ENCODE measurements at regions of chr18 and their contacts with region 1.

Region 1: GRCh38 chr18:36229188-36229587 is 41.9 kb downstream of the MOCOS start:
- DNase-seq: no peak
- H3K4me3 ChIP-seq: no peak overlapping the region
- H3K27ac ChIP-seq: no peak overlapping the region
- H3K4me1 ChIP-seq: no peaks in the 10 kb centered on the region
- H3K27me3 ChIP-seq: no peaks in the 10 kb centered on the region
- CTCF ChIP-seq: no peak

Region 2: GRCh38 chr18:36419905-36420531 is 190.8 kb after region 1 on chr18:
- CTCF ChIA-PET with region 1: no interaction called
- POLR2A ChIA-PET with region 1: no interaction called
- intact Hi-C with region 1: no loop called
- DNase-seq: peak in 1 of 2 experiments; percentile 13
- H3K4me3 ChIP-seq: no peak overlapping the region
- H3K27ac ChIP-seq: peak overlapping the region; percentile 26; the same call in 1 of the 2 replicates
- H3K4me1 ChIP-seq: peaks cover 4% of the 10 kb centered on the region; the same call in 1 of the 2 replicates
- H3K27me3 ChIP-seq: no peaks in the 10 kb centered on the region
- CTCF ChIP-seq: no peak

Region 3: GRCh38 chr18:36597636-36598035 is 368.4 kb after region 1 on chr18:
- CTCF ChIA-PET with region 1: no interaction called
- POLR2A ChIA-PET with region 1: interaction called, 10 read pairs
- intact Hi-C with region 1: no loop called
- DNase-seq: no peak
- H3K4me3 ChIP-seq: no peak overlapping the region
- H3K27ac ChIP-seq: no peak overlapping the region
- H3K4me1 ChIP-seq: no peaks in the 10 kb centered on the region
- H3K27me3 ChIP-seq: no peaks in the 10 kb centered on the region
- CTCF ChIP-seq: no peak

Measured in PC-9 (cell line).